ENCODE measurements at regions of chr7 and their contacts with region 1.

Region 1: GRCh38 chr7:2471396-2471795 is 4.8 kb downstream of the GRIFIN start:
- DNase-seq: no peak
- H3K4me3 Mint-ChIP-seq: no peak overlapping the region
- H3K27ac Mint-ChIP-seq: no peak overlapping the region
- H3K4me1 Mint-ChIP-seq: peaks cover 1% of the 10 kb centered on the region
- H3K27me3 Mint-ChIP-seq: peaks cover 12% of the 10 kb centered on the region

Region 2: DNA sequence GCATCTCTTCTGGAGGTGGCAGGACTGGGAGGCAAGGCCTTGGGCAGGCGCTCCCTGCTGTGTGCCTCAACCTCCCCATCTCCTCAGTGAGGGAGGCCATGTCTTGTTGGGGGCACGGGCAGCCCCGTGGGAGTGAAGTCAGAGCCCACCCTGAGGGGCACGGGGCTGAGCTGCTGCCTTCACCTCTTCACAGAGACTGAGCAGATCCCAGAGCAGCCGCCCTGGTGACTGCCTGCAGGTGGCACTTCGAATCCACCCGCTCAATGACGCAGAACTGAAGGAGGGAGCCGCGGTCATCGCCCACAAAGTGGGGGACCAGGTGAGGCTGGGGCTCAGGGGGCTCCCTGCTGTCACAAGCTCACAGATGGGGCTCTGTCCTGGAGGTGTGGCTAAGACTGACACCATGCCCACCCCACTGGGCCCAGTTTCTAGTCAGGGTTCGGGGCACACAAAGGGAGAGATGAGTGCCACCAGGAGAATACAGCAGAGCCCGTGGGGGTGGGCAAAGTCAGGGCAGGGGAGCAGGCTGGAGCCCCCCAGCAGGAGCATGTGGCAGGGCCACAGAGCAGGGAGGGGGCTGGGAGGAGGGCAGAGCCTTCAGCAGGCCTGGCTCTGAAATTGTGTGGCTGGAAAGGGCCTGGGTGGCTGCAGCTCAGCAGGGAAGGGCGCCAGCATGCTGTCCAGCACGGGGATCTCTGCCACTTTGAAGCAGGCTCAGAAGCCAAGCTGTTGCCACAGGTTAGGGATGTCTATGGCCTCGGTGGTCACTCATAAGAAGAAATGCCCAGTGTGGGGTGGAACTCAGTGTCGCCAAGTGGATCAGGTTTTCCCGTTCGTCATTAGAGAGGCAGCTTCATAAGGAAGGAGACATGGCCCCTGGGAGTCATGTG is 86.8 kb before region 1 on chr7:
- CTCF ChIA-PET with region 1: interaction called, 10 read pairs
- POLR2A ChIA-PET with region 1: no interaction called
- DNase-seq: no peak
- H3K4me3 Mint-ChIP-seq: no peak overlapping the region
- H3K27ac Mint-ChIP-seq: no peak overlapping the region
- H3K4me1 Mint-ChIP-seq: no peaks in the 10 kb centered on the region
- H3K27me3 Mint-ChIP-seq: no peaks in the 10 kb centered on the region

Region 3: DNA sequence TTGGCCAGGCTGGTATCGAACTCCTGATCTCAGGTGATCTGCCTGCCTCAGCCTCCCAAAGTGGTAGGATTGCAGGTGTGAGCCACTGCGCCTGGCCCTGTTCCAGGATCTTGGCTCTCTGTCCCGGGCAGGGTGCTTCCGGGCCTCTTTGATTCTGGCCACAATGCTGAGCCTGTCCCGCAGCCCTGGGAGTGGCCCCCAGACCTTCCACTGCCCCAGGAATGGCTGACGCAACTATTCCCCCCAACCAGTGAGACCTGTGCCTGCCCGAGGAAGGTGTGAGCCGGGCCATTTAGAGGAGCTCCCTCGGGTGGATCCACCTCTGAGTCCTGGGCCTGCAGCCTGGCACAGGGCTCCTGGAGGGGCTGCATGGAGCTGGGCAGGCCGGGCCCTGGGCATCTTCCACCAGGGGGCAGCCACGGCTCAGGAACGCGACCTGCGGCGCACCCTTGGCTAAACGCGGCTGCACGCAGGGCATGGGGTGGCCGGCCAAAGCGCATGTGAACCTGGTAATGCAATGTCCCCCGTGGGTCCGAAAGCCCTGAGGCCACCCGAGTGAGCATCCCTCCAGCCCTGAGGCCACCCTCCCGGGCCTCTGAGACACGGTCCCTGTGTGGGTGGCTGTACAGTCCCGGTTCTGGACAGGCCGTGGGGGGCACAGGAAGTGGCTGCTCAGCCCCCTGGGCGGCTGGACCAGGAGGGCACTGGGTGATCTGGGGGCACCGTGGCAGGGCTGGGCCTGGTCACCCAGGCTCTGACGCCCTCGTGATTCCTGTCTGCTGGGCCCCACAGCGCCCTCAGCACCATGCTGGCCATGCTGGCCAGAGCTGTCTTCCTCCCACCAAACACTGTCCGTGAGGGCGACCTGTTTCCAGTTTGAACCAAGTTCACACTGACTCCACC is 20.0 kb before region 1 on chr7:
- CTCF ChIA-PET with region 1: interaction called, 87 read pairs
- POLR2A ChIA-PET with region 1: interaction called, 8 read pairs
- DNase-seq: peak; percentile 77
- H3K4me3 Mint-ChIP-seq: no peak overlapping the region
- H3K27ac Mint-ChIP-seq: no peak overlapping the region
- H3K4me1 Mint-ChIP-seq: peaks cover 7% of the 10 kb centered on the region
- H3K27me3 Mint-ChIP-seq: peaks cover 5% of the 10 kb centered on the region

Region 4: GRCh38 chr7:2460188-2460587 is 11.2 kb before region 1 on chr7:
- CTCF ChIA-PET with region 1: interaction called, 13 read pairs
- POLR2A ChIA-PET with region 1: no interaction called
- DNase-seq: no peak
- H3K4me3 Mint-ChIP-seq: no peak overlapping the region
- H3K27ac Mint-ChIP-seq: no peak overlapping the region
- H3K4me1 Mint-ChIP-seq: peaks cover 18% of the 10 kb centered on the region
- H3K27me3 Mint-ChIP-seq: peaks cover under 1% of the 10 kb centered on the region

Region 5: GRCh38 chr7:2542026-2542915 is 70.9 kb after region 1 on chr7:
- CTCF ChIA-PET with region 1: no interaction called
- POLR2A ChIA-PET with region 1: no interaction called
- DNase-seq: no peak
- H3K4me3 Mint-ChIP-seq: no peak overlapping the region
- H3K27ac Mint-ChIP-seq: no peak overlapping the region
- H3K4me1 Mint-ChIP-seq: no peaks in the 10 kb centered on the region
- H3K27me3 Mint-ChIP-seq: no peaks in the 10 kb centered on the region